Activated CD8-positive, alpha-beta T cell treated with anti-CD3 and anti-CD28 coated beads for 36 hours (primary cell): ENCODE measurements at regions of chr19 and their contacts with region 1.

Region 1: GRCh38 chr19:4457654-4458395 is at the start of gene UBXN6:
- DNase-seq: peak; percentile 99
- ATAC-seq: peak; percentile 97
- H3K4me3 Mint-ChIP-seq: peak within 1 kb of the TSS; percentile 87
- H3K27ac Mint-ChIP-seq: peak within 1 kb of the TSS; percentile 84
- H3K4me1 Mint-ChIP-seq: peaks cover 19% of the 10 kb centered on the region
- H3K27me3 Mint-ChIP-seq: no peaks in the 10 kb centered on the region
- CTCF ChIP-seq: no peak
- total RNA-seq, gene UBXN6: 35.8 to 36.5 TPM

Region 2: GRCh38 chr19:4429771-4430171 is 28.1 kb before region 1 on chr19:
- CTCF ChIA-PET with region 1: no interaction called
- POLR2A ChIA-PET with region 1: no interaction called
- intact Hi-C with region 1: no loop called
- DNase-seq: no peak
- ATAC-seq: no peak
- H3K4me3 Mint-ChIP-seq: no peak overlapping the region
- H3K27ac Mint-ChIP-seq: no peak overlapping the region
- H3K4me1 Mint-ChIP-seq: no peaks in the 10 kb centered on the region
- H3K27me3 Mint-ChIP-seq: no peaks in the 10 kb centered on the region
- CTCF ChIP-seq: no peak

Region 3: DNA sequence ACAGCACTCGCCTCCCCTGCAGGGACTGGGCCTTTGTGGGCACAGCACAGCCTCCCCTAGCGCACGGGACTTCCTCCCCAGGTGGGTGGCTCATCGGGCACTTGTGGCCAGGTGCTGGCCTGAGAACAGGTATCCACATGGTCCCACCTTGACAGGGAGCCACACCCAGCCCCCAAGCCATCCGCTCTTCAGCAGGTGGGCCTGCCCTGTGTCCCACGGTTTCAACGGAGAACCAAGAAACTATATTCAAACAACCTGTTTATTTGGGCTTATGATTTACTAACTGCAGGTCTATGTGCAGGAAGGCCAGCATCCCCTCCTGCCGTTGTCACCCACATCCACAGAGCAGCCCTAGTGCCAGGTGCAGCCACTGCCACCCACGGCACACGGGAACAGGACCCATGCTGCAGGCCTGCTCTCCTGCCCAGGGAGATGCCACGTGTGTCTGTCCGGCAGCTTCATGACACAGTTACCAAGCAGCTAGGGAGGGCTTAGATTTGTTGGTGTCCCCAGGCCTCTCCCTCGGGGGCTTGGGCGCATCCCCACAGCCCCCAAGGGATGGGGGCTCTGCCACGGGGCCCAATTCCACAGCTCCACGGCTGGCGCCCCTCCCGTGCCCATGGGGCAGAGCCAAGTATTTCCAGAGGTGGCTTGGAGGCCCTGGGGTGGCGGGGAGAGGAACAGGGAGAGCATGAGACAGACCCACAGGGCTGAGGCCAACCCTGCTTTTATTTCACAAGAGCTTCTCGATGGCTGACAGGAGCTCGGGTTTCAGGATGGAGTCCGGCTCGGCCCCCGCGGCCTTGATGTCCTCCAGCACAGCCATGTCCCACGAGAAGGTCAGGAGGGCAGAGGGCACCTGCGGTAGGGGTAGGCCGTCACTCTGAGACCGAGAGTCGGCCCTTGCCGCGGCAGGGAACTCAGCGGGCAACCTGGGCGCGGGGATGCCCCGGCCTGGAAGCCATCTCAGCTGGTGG is 12.8 kb before region 1 on chr19:
- CTCF ChIA-PET with region 1: no interaction called
- POLR2A ChIA-PET with region 1: interaction called, 17 read pairs
- intact Hi-C with region 1: no loop called
- DNase-seq: no peak
- ATAC-seq: no peak
- H3K4me3 Mint-ChIP-seq: no peak overlapping the region
- H3K27ac Mint-ChIP-seq: no peak overlapping the region
- H3K4me1 Mint-ChIP-seq: peaks cover 3% of the 10 kb centered on the region
- H3K27me3 Mint-ChIP-seq: no peaks in the 10 kb centered on the region
- CTCF ChIP-seq: no peak

Region 4: DNA sequence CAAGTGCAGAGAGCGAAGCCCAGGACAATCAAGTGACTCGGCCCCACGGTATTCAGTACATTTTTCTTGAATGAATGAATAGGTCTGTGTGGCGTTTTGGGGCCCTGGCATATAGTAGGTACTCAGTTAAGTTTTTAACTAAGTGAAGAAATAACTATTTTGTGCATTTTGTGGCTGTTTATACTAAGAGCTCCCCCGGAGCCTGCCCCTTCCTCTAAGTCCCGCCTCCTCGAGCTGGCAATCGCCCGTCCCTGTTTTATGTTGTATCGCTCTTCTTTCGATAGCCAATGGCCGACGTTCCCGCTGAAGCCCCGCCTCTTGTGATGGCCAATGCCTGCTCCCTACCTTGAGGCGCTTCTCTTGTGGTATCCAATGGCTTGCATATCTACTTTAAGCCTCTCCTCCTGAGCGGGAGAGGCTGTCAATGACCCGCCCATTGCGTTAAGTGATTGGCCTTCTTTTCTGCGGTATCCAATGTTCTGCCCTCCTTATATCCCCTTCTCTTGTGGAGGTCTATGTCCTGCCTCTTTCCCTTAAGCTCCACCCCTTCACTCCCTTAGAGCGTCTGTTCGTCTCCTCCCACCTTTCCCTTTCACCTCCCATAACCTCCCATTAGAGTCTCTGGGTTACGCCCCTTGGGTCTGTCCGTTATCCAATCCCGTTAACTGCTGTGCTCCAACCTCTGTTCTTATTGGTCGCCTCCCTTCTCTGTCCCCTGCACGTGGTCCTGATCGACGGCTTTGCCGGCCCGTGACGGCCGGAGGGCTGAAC is 13.8 kb after region 1 on chr19:
- CTCF ChIA-PET with region 1: interaction called, 4 read pairs
- POLR2A ChIA-PET with region 1: interaction called, 10 read pairs
- intact Hi-C with region 1: no loop called
- DNase-seq: peak; percentile 99
- ATAC-seq: peak; percentile 89
- H3K4me3 Mint-ChIP-seq: no peak overlapping the region
- H3K27ac Mint-ChIP-seq: no peak overlapping the region
- H3K4me1 Mint-ChIP-seq: peaks cover 21% of the 10 kb centered on the region
- H3K27me3 Mint-ChIP-seq: no peaks in the 10 kb centered on the region
- CTCF ChIP-seq: no peak